Left ventricle myocardium inferior (tissue), 1 donor: ENCODE measurements at regions of chr22 and their contacts with region 1.

Region 1: DNA sequence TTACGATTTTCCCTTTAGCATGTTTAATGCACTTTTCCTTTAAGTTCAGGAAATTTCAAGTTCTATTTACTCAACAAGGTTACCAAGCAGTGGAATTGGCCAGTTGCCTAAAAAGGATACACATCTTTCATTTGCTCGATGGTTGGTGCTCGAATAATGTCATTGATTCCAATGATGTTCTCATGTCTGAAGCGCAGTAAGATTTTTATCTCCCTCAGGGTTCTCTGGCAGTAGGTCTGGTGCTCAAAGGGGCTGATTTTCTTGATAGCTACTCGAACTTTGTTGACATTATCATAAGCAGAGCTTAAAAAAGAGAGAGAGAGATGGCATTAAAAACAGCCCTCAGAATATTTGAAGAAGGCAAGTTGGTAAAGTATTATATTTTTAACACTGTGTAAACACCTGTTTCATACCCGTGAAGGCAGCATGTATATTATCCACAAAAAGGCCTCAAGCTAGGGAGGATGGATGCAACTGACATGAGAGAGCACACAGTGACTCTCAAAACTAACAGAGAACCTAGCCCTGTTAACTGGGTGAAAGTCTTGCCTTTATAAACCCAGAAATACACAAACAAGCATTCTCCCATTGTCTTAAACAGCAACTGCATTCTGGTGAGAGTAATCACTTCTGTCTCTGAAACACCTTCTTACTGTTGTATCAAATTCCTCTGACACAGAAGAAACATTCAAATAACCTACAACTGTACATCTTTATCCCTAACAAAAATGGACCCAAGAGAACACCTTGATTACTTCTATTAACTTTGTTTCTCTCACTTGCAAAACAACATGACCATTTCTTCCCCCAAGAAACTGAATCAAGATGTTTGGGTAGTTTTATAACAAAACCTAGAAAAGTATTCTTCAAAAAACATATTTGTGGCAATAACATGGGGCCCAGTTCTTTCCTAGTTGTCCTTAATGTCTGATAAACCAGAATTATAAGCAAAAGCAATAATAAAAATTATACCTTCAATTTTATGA is 59.6 kb downstream of the MAPK1 start:
- DNase-seq: no peak
- H3K4me3 ChIP-seq: no peak overlapping the region
- H3K27ac ChIP-seq: no peak overlapping the region
- H3K4me1 ChIP-seq: peaks cover 19% of the 10 kb centered on the region
- H3K27me3 ChIP-seq: no peaks in the 10 kb centered on the region
- CTCF ChIP-seq: no peak

Region 2: DNA sequence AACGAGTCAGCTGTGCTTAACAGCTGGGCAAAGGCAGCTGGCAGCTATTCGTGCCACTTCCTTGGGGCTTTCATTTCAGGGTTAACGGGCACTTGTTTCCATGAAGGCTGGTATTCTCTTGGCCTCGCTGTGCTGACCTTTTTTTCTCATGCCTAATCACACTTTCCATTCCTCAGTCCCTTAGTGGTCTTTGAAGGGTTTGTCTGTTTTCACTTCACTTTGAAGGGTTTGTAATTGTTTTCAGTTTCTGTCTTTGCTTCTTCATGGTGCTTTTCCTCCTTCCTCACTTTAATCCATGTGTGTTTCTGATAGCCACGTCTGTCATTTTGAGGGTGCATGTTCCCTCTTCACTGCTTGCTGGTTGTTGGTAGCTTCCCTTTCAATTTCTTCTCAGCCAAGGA is 117.4 kb before region 1 on chr22:
- intact Hi-C with region 1: no loop called
- DNase-seq: no peak
- H3K4me3 ChIP-seq: no peak overlapping the region
- H3K27ac ChIP-seq: no peak overlapping the region
- H3K4me1 ChIP-seq: no peaks in the 10 kb centered on the region
- H3K27me3 ChIP-seq: no peaks in the 10 kb centered on the region
- CTCF ChIP-seq: no peak

Region 3: GRCh38 chr22:21741806-21742205 is 66.0 kb before region 1 on chr22:
- intact Hi-C with region 1: loop called (anchors 10 kb)
- DNase-seq: no peak
- H3K4me3 ChIP-seq: no peak overlapping the region
- H3K27ac ChIP-seq: no peak overlapping the region
- H3K4me1 ChIP-seq: no peaks in the 10 kb centered on the region
- H3K27me3 ChIP-seq: no peaks in the 10 kb centered on the region
- CTCF ChIP-seq: no peak

Region 4: GRCh38 chr22:21867528-21868266 is 59.9 kb after region 1 on chr22 and contains the start of gene MAPK1:
- intact Hi-C with region 1: loop called (anchors 10 kb)
- DNase-seq: peak; percentile 95
- H3K4me3 ChIP-seq: peak within 1 kb of the TSS; percentile 74
- H3K27ac ChIP-seq: peak within 1 kb of the TSS; percentile 92
- H3K4me1 ChIP-seq: peaks cover 47% of the 10 kb centered on the region
- H3K27me3 ChIP-seq: no peaks in the 10 kb centered on the region
- CTCF ChIP-seq: peak; percentile 41
- total RNA-seq, gene MAPK1: 91.7 TPM